ENCODE measurements at regions of chr19 and their contacts with region 1.

Region 1: DNA sequence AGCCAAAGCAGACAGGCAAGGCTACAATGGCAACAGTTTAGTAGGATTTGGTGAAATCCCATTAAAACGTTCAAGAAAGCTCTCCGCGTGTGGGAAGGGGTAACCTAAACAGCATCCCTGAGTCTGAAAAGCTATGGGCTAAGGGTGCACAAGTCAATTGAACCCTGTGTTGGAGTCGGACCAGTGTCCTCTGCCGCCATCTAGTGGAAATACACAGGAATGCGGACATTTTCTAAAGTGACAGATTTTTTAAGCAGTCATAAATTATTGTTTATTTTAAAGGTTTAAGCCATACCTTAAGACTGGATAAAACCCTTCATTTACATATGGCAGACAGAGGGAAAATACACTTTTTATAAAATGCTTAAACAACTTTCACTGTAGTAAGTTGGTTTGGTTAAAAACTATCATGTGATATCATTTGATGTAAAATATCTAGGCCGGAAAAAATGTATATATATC is 26.5 kb upstream of the LSM14A start:
- DNase-seq: peak; percentile 45
- H3K4me3 ChIP-seq: no peak overlapping the region
- H3K27ac ChIP-seq: no peak overlapping the region
- H3K4me1 ChIP-seq: no peaks in the 10 kb centered on the region
- H3K27me3 ChIP-seq: no peaks in the 10 kb centered on the region
- CTCF ChIP-seq: peak; percentile 75

Region 2: GRCh38 chr19:34041925-34042521 is 103.7 kb before region 1 on chr19:
- intact Hi-C with region 1: loop called (anchors 5 kb)
- DNase-seq: peak; percentile 74
- H3K4me3 ChIP-seq: no peak overlapping the region
- H3K27ac ChIP-seq: no peak overlapping the region
- H3K4me1 ChIP-seq: no peaks in the 10 kb centered on the region
- H3K27me3 ChIP-seq: no peaks in the 10 kb centered on the region
- CTCF ChIP-seq: peak; percentile 83

Region 3: GRCh38 chr19:34120846-34121639 is 24.7 kb before region 1 on chr19:
- intact Hi-C with region 1: loop called (anchors 2 kb)
- DNase-seq: peak; percentile 21
- H3K4me3 ChIP-seq: no peak overlapping the region
- H3K27ac ChIP-seq: no peak overlapping the region
- H3K4me1 ChIP-seq: no peaks in the 10 kb centered on the region
- H3K27me3 ChIP-seq: no peaks in the 10 kb centered on the region
- CTCF ChIP-seq: peak; percentile 54

Region 4: DNA sequence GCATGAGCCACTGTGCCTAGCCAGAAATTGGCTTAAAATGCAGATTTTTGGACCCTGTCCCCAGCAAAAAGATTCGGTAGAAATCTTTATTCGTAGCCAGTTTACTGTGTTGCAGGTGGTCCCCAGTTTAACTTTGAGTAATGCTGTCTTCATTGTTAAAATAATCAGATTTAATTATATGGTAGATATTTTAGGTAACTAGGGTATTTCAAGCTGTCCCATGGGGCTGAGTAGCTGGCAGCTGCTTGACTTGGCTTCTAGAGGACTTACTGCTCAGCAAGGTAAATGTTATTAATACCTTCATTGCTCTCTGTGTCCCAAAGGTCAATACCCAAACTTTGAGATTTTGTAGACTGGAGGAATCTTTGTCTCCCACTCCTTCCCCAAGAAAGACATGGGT is 47.7 kb after region 1 on chr19:
- intact Hi-C with region 1: no loop called
- DNase-seq: no peak
- H3K4me3 ChIP-seq: no peak overlapping the region
- H3K27ac ChIP-seq: no peak overlapping the region
- H3K4me1 ChIP-seq: no peaks in the 10 kb centered on the region
- H3K27me3 ChIP-seq: no peaks in the 10 kb centered on the region
- CTCF ChIP-seq: no peak

Measured in colonic mucosa (tissue), 4 donors.